Heart right ventricle (tissue), 16 donors: ENCODE measurements at regions of chr10 and their contacts with region 1.

Region 1: DNA sequence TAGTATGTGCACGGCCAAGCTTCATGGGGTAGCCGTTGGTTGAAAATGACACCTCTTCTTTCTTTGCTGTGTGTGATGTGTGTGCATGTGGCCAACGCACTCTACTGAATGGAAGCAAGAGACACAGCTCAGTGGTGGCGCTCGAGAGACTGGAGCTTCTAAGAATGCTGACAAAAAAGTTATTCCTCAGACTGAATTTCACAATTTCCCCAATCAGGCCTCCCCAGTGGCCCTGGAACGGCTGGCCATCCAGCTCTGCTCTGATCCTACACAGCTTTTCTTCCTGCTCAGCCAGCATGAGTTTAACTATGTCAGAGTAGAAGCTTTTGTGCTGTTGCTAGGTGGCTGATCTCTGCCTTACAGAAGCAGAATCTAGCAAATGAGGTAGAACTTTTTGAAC is 186.7 kb upstream of the PLXDC2 start:
- DNase-seq: peak; percentile 63 to 70
- ATAC-seq: peak; percentile 84 to 97 (median 93)
- H3K4me3 ChIP-seq: no peak overlapping the region
- H3K27ac ChIP-seq: peak overlapping the region in 6 of 10 donors; percentile 18 to 59 (median 48)
- H3K4me1 ChIP-seq: peaks cover 0 to 12% (median 0%) of the 10 kb centered on the region in 9 donors
- H3K27me3 ChIP-seq: no peaks in the 10 kb centered on the region
- CTCF ChIP-seq: peak in 5 of 9 donors; percentile 26 to 40 (median 36)

Region 2: DNA sequence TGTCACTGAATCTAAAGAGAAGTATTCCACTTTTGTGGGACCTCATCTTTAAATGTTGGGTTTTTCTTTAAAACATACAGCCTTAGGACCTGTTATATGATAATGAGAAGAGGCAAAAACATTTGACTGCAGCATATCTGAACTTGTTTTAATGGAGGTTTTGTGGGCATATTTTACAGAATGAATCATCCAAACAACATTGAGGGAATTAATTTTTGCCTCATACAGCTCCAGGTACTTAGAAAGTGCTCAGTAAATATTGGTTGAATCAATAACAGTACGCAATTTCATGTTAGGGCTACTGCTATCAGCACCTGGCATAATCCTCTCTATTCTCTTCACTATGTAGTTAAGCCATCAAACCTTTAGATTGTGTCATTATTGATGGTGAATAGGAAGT is 465.1 kb before region 1 on chr10:
- intact Hi-C with region 1: no loop called
- DNase-seq: no peak
- ATAC-seq: no peak
- H3K4me3 ChIP-seq: no peak overlapping the region
- H3K27ac ChIP-seq: no peak overlapping the region
- H3K4me1 ChIP-seq: no peaks in the 10 kb centered on the region
- H3K27me3 ChIP-seq: peaks cover 0 to 5% (median 0%) of the 10 kb centered on the region in 7 donors
- CTCF ChIP-seq: no peak

Region 3: GRCh38 chr10:19302117-19302516 is 327.4 kb before region 1 on chr10:
- intact Hi-C with region 1: no loop called
- DNase-seq: no peak
- ATAC-seq: no peak
- H3K4me3 ChIP-seq: no peak overlapping the region
- H3K27ac ChIP-seq: no peak overlapping the region
- H3K4me1 ChIP-seq: no peaks in the 10 kb centered on the region
- H3K27me3 ChIP-seq: no peaks in the 10 kb centered on the region
- CTCF ChIP-seq: no peak

Region 4: DNA sequence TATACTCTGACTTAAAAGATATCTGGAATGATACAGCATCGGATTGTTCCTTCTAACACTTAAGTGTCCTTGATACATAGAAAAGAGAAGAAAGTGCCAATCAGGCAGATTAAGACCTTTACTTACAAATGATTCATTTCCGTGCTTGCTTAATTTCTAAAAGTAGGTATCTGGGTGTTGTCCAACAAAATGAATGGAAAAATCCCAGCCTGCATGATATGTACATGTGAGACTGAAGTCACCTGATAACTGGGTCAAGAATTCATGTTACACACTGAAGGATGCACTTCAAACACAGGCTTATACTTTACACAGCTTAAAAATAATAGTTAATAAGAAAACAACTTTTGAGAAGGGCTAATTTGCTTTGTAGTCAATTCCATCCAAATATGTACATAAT is 161.5 kb after region 1 on chr10:
- intact Hi-C with region 1: loop called in 1 of 10 experiments (anchors 10 kb)
- DNase-seq: no peak
- ATAC-seq: no peak
- H3K4me3 ChIP-seq: no peak overlapping the region
- H3K27ac ChIP-seq: no peak overlapping the region
- H3K4me1 ChIP-seq: no peaks in the 10 kb centered on the region
- H3K27me3 ChIP-seq: no peaks in the 10 kb centered on the region
- CTCF ChIP-seq: no peak